Transverse colon (tissue), 4 donors: ENCODE measurements at regions of chr5 and their contacts with region 1.

Region 1: DNA sequence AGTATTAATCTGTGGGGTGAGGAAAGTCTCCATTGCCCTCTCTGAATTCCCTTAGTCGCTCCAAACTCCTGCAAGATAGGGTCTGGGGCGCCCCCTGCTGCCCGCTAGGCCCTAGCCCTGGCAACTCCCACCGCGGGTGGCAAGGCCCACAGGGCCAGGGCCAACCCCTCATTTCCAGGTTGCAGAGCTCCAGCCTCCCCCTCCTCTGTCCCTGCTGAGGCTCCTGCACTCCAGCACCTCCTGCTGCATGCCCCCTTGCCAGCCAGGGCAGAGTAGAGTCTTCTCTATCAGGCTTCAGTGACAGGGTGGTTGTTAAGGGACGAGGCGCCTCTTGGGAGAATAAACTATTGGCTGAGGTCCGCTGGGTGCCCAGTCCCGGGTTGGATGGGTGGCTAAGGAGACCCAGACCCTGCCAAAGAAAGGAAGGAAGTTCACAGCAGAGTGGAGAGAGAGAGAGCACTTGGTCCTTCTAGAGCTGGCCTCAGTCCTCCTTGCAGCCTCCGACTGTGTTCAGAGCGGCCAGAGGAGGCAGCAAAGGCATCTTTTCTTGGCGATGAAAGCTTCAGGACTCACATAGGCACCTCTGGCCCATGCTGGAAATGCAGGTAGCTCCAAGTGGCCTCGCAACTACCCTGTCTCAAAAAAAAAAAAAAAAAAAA is 45.6 kb downstream of the SAR1B start:
- DNase-seq: peak; percentile 86
- H3K4me3 ChIP-seq: peak overlapping the region in 1 of 4 donors; percentile 29
- H3K27ac ChIP-seq: peak overlapping the region in 2 of 4 donors; percentile 27 to 44
- H3K4me1 ChIP-seq: peaks cover 0 to 15% (median 6%) of the 10 kb centered on the region in 4 donors
- H3K27me3 ChIP-seq: no peaks in the 10 kb centered on the region
- CTCF ChIP-seq: peak; percentile 67 to 79 (median 75)
- EP300 ChIP-seq: no peak
- POLR2A ChIP-seq: no peak

Region 2: GRCh38 chr5:134176511-134177368 is 410.3 kb before region 1 on chr5 and contains the start of gene SKP1:
- in situ Hi-C with region 1: loop called in 2 of 4 experiments (anchors 10 to 25 kb)
- intact Hi-C with region 1: loop called (anchors 5 kb)
- DNase-seq: peak; percentile 87
- H3K4me3 ChIP-seq: peak within 1 kb of the TSS; percentile 68 to 96 (median 78)
- H3K27ac ChIP-seq: peak within 1 kb of the TSS; percentile 95 to 99 (median 98)
- H3K4me1 ChIP-seq: peaks cover 14 to 51% (median 33%) of the 10 kb centered on the region in 4 donors
- H3K27me3 ChIP-seq: no peaks in the 10 kb centered on the region
- CTCF ChIP-seq: no peak
- EP300 ChIP-seq: no peak
- POLR2A ChIP-seq: peak; percentile 100
- total RNA-seq, gene SKP1: 32.6 to 224 (median 170) TPM

Region 3: DNA sequence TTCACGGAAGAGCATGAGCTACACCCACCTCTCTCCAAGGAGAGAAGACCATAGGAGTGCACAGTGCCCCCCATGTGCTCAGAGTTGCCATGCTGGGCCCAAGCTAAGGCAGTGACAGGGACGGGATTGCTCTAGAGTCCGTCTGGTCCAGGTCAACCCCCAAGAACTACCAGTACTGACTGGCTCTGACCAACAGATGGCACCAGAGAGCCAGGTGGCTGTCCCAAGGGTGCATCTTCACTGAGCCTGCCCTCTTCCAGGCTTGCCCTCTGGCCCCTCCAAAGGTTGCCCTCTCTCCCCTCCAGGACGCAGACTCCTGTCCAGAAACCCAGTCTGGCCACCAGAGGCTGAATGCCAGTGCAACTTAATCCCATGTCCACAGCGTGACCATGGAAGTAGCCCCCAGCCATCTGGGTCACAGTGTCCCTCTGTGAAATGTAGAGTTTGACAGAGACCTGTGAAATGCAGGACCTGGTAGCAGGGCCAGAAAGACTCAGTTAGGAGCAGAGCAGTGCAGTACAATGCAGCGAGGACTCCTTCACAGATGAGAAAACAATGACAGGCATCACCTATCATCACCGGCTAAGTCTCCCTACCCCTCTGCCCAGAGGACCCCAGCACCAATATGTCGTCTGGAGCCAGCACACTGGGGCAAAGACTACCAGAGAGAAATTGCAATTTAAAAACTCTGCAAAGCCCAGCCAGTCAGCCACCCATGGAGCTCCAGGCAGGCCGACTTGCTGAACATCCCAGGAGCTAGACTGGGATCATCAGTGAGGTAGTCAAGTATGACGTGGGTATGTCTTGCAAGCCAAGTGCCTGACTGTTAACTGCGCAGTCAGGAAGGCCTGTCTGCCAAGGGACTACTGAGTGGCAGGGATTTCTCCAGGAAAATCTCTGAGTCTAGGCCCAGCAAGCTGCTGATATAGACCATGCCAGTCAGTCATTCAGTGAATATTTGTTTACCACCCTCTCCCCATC is 402.6 kb before region 1 on chr5:
- in situ Hi-C with region 1: loop called in 2 of 4 experiments (anchors 10 to 25 kb)
- intact Hi-C with region 1: loop called (anchors 5 kb)
- DNase-seq: peak; percentile 79
- H3K4me3 ChIP-seq: no peak overlapping the region
- H3K27ac ChIP-seq: no peak overlapping the region
- H3K4me1 ChIP-seq: no peaks in the 10 kb centered on the region
- H3K27me3 ChIP-seq: no peaks in the 10 kb centered on the region
- CTCF ChIP-seq: peak; percentile 87 to 92 (median 90)
- EP300 ChIP-seq: no peak
- POLR2A ChIP-seq: no peak

Region 4: DNA sequence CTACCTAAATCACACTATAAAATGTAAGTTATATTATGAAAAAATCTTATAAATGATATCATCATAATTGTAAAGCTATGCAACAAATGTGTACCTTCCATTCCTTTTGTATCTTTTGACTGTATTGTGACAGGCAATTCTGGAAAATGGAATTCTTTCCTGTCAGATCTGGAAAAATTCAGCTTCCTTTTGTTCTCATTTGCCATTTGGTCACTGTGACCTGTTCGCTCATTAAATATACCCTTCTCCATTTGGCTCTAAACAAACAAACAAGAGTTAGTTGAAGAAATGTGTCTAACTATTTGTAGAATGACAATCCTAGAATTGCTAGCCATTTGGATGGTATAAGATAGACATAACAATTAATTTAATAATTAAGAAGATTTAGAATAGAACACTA is 282.7 kb before region 1 on chr5:
- in situ Hi-C with region 1: loop called in 3 of 4 experiments (anchors 5 to 10 kb)
- intact Hi-C with region 1: loop called (anchors 5 kb)
- DNase-seq: no peak
- H3K4me3 ChIP-seq: no peak overlapping the region
- H3K27ac ChIP-seq: no peak overlapping the region
- H3K4me1 ChIP-seq: peaks cover 0 to 5% (median 2%) of the 10 kb centered on the region in 4 donors
- H3K27me3 ChIP-seq: no peaks in the 10 kb centered on the region
- CTCF ChIP-seq: no peak
- EP300 ChIP-seq: no peak
- POLR2A ChIP-seq: no peak

Region 5: GRCh38 chr5:134411546-134412266 is 175.3 kb before region 1 on chr5 and contains the start of gene CDKN2AIPNL:
- in situ Hi-C with region 1: loop called in 1 of 4 experiments (anchors 25 kb)
- intact Hi-C with region 1: no loop called
- DNase-seq: peak; percentile 94
- H3K4me3 ChIP-seq: peak within 1 kb of the TSS; percentile 47 to 88 (median 76)
- H3K27ac ChIP-seq: peak within 1 kb of the TSS; percentile 79 to 90 (median 86)
- H3K4me1 ChIP-seq: peaks cover 10 to 47% (median 33%) of the 10 kb centered on the region in 4 donors
- H3K27me3 ChIP-seq: no peaks in the 10 kb centered on the region
- CTCF ChIP-seq: peak; percentile 65 to 93 (median 72)
- EP300 ChIP-seq: no peak
- POLR2A ChIP-seq: peak; percentile 76
- total RNA-seq, gene CDKN2AIPNL: 3.2 to 18.7 (median 12.9) TPM in 3 of 4 donors, not detected in the other

Region 6: DNA sequence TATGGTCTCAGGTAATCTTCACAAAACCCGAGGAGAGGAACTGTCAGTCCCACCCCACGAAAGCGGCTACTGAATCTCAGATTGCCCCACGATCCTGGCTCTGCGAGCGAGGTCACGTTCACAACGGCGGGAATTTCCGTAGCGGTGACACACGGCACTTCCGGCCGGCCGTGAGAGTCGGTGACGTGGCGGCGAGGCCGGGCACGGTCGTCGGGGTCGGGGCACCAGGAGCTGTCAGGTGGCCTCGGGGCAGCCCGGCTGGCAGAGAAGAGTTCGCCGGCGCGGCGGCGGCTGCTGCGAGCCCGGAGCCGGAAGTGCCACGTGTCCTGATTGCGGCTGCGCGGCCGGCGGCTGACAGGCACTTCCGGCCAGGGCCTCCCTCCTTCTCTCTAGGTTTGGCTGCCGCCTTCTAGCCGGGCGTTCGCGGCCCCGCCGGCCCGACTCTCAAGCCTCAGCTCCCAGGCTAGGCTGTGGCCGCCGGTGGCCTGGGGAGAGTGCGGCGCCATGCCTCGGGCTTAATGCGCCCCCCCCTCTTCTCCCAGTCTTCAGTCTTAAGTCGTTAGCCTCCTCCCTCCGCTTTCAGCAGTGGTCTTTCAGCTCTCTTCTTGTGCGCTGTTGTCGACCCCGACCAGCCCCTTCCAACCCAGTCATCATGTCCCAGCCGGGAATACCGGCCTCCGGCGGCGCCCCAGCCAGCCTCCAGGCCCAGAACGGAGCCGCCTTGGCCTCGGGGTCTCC is 61.6 kb after region 1 on chr5 and contains the start of gene SEC24A:
- in situ Hi-C with region 1: no loop called
- intact Hi-C with region 1: no loop called
- DNase-seq: peak; percentile 94
- H3K4me3 ChIP-seq: peak within 1 kb of the TSS; percentile 79 to 95 (median 88)
- H3K27ac ChIP-seq: peak within 1 kb of the TSS; percentile 92 to 98 (median 96)
- H3K4me1 ChIP-seq: peaks cover 3 to 37% (median 22%) of the 10 kb centered on the region in 4 donors
- H3K27me3 ChIP-seq: no peaks in the 10 kb centered on the region
- CTCF ChIP-seq: peak in 2 of 5 experiments; percentile 15 to 20
- EP300 ChIP-seq: no peak
- POLR2A ChIP-seq: peak; percentile 81
- total RNA-seq, gene SEC24A: 9.2 to 26.7 (median 18.6) TPM

Region 7: DNA sequence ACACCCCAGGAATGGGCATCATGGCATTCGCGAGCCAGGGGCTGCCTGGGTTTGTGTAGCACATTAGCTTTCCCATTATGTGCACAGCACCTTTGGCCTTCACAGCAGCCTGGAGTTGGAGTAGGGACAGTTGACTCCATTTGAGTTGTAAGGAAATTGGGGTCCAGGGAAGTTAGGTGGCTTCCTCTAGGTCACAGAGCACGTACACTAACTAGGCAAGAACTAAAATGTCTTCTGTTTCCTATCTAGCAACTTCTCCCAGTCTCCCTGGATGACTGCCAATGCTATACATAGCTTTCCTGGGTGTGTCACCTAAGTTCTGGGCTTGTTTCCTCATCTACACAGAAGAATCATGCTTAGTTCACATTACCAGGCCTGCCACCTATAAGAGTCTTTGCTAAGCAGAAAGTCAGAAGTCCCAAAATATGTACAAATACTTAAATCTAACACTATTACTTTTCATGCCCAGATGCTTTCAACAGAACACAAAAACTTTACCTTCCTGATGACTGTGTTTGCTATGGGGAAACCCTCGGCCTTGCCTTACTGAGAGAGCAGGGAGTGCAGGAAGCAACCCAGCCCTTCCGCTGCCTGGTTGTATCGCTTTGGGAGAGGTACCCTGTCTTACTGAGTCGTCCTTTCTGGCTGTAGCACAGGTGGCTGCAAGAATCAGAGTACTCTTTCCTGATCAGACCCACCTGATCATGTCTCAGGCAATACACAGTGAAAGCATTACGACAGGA is 800.1 kb after region 1 on chr5:
- in situ Hi-C with region 1: no loop called
- intact Hi-C with region 1: no loop called
- DNase-seq: peak; percentile 70
- H3K4me3 ChIP-seq: no peak overlapping the region
- H3K27ac ChIP-seq: peak overlapping the region; percentile 72 to 84 (median 80)
- H3K4me1 ChIP-seq: peaks cover 6 to 40% (median 19%) of the 10 kb centered on the region in 4 donors
- H3K27me3 ChIP-seq: no peaks in the 10 kb centered on the region
- CTCF ChIP-seq: no peak
- EP300 ChIP-seq: no peak
- POLR2A ChIP-seq: no peak

Region 8: DNA sequence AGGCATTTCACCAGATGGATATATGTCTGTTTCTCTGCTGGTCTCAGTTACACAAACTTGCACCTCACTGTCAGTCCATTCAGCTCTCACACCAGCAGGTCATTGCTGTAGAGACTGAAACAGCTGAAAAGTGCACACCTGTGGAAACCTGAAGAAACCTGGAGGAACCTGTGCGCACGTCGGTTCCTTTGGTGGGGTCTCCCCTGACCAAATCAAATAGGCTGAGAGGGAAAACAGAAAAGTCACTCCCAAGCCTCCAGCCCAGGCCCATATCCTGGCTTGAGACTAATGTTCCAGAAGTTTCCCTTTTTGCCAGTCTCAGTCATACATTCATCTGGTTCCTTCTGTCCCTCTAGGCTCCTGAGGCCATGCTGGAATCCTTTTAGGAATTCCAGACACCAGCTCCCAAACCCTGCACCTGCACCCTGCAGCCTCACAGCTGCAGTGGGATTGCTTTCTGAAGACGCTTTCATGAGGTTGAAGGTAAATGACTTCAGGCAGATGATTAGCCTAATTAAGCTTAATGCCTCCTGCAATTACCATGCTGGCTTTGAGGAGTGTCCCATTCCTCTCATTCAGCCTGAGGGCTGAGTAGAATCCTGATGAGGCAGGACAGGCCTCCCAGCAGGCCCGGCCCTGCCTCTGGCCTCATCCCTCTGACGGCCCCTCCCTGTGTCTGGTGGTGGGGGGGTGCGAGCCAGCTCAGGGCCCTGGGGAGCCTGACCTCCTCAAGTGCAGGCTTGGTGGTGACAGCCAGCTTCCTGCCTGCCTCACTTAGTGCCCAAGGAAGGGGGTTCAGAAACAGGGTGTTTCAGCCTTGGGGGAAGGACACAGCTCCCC is 1016.1 kb after region 1 on chr5:
- in situ Hi-C with region 1: no loop called
- intact Hi-C with region 1: no loop called
- DNase-seq: no peak
- H3K4me3 ChIP-seq: no peak overlapping the region
- H3K27ac ChIP-seq: no peak overlapping the region
- H3K4me1 ChIP-seq: no peaks in the 10 kb centered on the region
- H3K27me3 ChIP-seq: no peaks in the 10 kb centered on the region
- CTCF ChIP-seq: no peak
- EP300 ChIP-seq: no peak
- POLR2A ChIP-seq: no peak